Heart left ventricle (tissue), 16 donors: ENCODE measurements at regions of chr17 and their contacts with region 1.

Region 1: GRCh38 chr17:4074831-4075495 is 67.9 kb downstream of the ZZEF1 start:
- DNase-seq: no peak
- ATAC-seq: peak in 3 of 4 donors; percentile 52 to 61 (median 54)
- H3K4me3 ChIP-seq: no peak overlapping the region
- H3K27ac ChIP-seq: peak overlapping the region in 1 of 12 donors; percentile 54
- H3K4me1 ChIP-seq: peaks cover 0 to 17% (median 0%) of the 10 kb centered on the region in 12 donors
- H3K27me3 ChIP-seq: no peaks in the 10 kb centered on the region
- CTCF ChIP-seq: peak in 11 of 12 donors; percentile 36 to 70 (median 58)
- POLR2A ChIP-seq: no peak

Region 2: DNA sequence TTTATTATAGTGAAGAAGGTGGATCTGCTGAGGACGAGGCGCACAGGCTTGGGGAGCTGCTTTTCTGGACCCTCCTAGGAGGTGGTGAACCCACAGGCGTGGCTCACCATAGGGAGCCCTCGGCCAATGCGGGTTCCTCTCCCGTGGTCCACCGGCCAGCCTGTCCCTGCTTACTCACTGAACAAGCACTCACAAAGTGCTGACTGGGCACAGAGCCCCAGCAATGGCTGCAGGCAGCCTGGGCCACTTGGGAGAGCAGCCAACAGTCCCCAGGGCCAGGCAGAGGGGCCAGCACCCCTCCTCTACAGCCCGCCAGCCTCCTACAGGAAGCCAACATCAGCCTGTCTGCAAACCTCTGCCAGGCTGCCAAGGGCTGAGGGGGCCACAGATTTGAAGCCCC is 209.8 kb before region 1 on chr17:
- intact Hi-C with region 1: loop called in 1 of 10 experiments (anchors 5 kb)
- DNase-seq: peak in 2 of 5 donors; percentile 44 to 48
- ATAC-seq: peak in 2 of 4 donors; percentile 62 to 65
- H3K4me3 ChIP-seq: no peak overlapping the region
- H3K27ac ChIP-seq: no peak overlapping the region
- H3K4me1 ChIP-seq: peaks cover 0 to 9% (median 0%) of the 10 kb centered on the region in 12 donors
- H3K27me3 ChIP-seq: no peaks in the 10 kb centered on the region
- CTCF ChIP-seq: no peak
- POLR2A ChIP-seq: no peak

Region 3: DNA sequence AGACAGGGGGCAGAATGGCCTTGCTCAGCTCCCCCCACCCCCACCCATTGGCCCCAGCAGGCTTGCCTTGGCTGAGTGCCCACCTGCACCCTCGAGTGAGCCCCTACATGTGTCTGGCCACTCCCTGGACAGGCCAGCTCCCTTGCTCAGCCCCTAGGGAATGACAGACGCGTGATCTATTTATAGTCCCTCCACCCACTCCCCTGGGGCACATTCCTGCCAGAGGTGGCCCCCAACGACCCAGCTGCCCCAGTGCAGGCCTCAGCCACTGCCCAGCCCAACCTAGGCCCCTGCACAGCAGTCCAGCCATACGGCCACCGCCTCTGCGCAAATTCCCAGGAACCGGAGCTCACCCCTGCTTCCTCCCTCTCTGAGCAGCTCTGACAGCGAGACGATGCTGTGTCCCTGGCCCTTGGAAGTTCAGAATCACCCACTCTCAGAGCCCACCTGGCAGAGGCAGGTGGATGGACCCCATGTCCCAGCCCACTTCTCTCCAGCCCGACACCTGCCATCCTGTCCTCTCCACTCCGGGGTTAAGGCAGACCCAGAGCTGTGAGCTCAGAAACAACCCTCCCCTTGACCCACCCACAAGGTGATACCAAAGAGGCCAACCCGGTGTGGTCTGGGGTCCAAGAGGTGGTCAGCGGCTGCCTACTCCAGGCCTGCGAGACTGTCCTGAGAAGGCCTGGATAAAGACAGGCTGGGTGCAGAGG is 147.2 kb before region 1 on chr17:
- intact Hi-C with region 1: loop called in 1 of 10 experiments (anchors 5 kb)
- DNase-seq: peak in 1 of 5 donors; percentile 46
- ATAC-seq: peak; percentile 44 to 76 (median 54)
- H3K4me3 ChIP-seq: no peak overlapping the region
- H3K27ac ChIP-seq: peak overlapping the region in 1 of 12 donors; percentile 32
- H3K4me1 ChIP-seq: peaks cover 0 to 23% (median 7%) of the 10 kb centered on the region in 12 donors
- H3K27me3 ChIP-seq: no peaks in the 10 kb centered on the region
- CTCF ChIP-seq: no peak
- POLR2A ChIP-seq: no peak

Region 4: GRCh38 chr17:4032738-4033137 is 42.2 kb before region 1 on chr17:
- intact Hi-C with region 1: loop called in 1 of 10 experiments (anchors 5 kb)
- DNase-seq: no peak
- ATAC-seq: no peak
- H3K4me3 ChIP-seq: no peak overlapping the region
- H3K27ac ChIP-seq: no peak overlapping the region
- H3K4me1 ChIP-seq: no peaks in the 10 kb centered on the region
- H3K27me3 ChIP-seq: no peaks in the 10 kb centered on the region
- CTCF ChIP-seq: no peak
- POLR2A ChIP-seq: no peak

Region 5: DNA sequence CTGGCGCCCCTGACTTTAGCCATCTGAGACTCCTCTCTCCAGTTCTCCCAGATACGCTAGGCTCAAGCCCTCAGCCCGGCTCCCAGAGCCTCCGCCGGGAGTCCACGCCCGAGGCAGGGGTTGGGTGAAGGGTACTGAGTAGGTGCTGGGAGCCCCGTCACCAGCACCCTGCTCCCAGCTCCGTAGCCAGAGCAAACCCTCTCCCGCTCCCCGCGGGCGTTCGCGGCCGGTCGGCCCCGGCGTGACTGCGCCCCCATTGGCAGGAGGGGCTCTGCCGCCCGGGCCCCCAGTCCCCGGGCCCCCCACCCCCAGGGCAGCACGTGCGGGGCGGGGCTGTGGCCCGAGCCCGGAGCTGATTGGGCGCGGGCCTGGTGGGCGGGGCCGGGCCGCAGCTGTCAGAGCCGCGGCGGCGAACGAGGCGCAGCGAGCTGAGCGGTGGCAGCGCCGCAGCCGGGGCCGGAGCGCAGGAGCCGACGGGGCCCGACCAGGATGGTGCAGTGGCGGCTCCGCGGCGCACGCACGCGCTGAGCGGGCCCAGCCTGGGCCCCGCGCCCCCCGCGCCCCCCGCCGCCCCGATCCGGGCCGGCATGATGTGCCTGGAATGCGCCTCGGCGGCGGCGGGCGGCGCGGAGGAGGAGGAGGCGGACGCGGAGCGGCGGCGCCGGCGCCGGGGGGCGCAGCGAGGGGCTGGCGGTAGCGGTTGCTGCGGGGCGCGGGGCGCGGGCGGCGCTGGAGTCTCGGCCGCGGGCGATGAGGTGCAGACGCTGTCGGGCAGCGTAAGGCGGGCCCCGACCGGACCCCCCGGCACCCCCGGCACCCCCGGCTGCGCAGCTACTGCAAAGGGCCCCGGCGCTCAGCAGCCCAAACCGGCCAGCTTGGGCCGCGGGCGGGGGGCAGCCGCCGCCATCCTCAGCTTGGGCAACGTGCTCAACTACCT is 423.8 kb after region 1 on chr17 and contains the start of gene SPNS2:
- intact Hi-C with region 1: no loop called
- DNase-seq: peak; percentile 70 to 84 (median 76)
- ATAC-seq: peak; percentile 68 to 94 (median 88)
- H3K4me3 ChIP-seq: peak within 1 kb of the TSS; percentile 18 to 75 (median 62)
- H3K27ac ChIP-seq: peak within 1 kb of the TSS; percentile 26 to 82 (median 72)
- H3K4me1 ChIP-seq: peaks cover 0 to 54% (median 29%) of the 10 kb centered on the region in 12 donors
- H3K27me3 ChIP-seq: peaks cover 0 to 33% (median 0%) of the 10 kb centered on the region in 9 donors
- CTCF ChIP-seq: peak in 1 of 12 donors; percentile 4
- POLR2A ChIP-seq: peak in 1 of 2 donors; percentile 48
- total RNA-seq, gene SPNS2: 6.4 to 20.4 (median 11.4) TPM